ENCODE measurements at regions of chr3 and their contacts with region 1.

Region 1: DNA sequence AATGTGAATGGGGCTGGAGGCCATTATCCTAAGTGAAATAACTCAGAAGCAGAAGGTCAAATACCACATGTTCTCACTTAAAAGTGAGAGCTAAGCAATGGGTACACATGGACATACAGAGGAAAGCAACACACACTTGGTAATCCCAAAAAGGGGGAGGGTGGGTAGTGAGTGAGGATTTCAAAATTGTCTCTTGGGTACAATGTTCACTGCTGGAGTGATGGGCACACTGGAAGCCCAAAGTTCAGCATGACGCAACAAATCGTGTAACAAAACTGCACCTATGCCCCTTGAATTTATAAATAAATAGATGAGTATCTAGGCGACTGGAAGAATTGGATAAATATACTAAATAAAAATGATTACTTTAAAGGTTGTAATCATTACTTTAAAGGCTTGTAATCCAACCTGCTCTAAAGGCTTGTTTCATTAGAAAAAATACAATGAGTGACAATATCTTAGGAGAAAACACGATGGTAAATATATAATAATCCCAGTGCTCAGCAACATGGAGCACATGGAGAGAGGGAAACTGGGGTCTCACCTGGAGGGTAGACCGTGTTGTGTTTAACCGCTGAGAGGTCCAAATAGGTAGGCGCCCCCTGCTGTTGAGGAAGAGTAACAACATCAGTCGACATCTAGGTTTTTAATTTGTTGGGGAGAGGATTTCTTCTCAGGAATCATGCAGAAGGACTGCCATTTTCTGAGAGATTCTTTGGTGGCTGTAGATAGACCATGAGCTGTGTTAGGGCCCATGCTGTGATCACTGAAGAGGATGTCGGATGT is 78.5 kb upstream of the ROBO1 start:
- DNase-seq: peak; percentile 4
- H3K4me3 ChIP-seq: no peak overlapping the region
- H3K27ac ChIP-seq: no peak overlapping the region
- H3K4me1 ChIP-seq: no peaks in the 10 kb centered on the region
- CTCF ChIP-seq: peak; percentile 79

Region 2: GRCh38 chr3:79521238-79521848 is 325.0 kb before region 1 on chr3:
- CTCF ChIA-PET with region 1: no interaction called
- POLR2A ChIA-PET with region 1: no interaction called
- intact Hi-C with region 1: loop called (anchors 1 kb)
- DNase-seq: peak; percentile 39
- H3K4me3 ChIP-seq: no peak overlapping the region
- H3K27ac ChIP-seq: no peak overlapping the region
- H3K4me1 ChIP-seq: no peaks in the 10 kb centered on the region
- CTCF ChIP-seq: peak; percentile 86

Region 3: DNA sequence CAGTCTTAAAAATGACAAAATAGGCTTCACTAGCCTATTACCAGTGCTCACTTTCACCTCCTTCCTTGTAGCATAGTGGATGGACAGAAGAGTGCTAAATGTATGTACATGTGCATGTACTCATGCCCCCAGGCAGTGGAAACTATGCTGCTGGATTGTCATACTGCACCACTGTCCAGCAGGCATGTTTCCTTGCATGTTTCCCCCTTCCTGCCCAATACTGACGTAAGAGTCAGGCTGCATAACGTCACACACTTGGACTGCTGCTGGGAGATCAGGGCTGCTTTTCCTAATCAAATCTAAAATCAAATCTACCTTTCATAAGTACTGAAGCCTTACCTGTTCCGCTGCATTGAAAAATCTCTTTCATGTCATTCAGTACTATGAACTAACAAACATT is 10.7 kb before region 1 on chr3:
- CTCF ChIA-PET with region 1: no interaction called
- POLR2A ChIA-PET with region 1: no interaction called
- intact Hi-C with region 1: no loop called
- DNase-seq: no peak
- H3K4me3 ChIP-seq: no peak overlapping the region
- H3K27ac ChIP-seq: no peak overlapping the region
- H3K4me1 ChIP-seq: no peaks in the 10 kb centered on the region
- CTCF ChIP-seq: no peak